H1 (cell line): ENCODE measurements at regions of chr22 and their contacts with region 1.

Region 1: GRCh38 chr22:41946629-41947423 is at the start of gene CENPM:
- DNase-seq: peak; percentile 78 to 97
- H3K4me3 ChIP-seq: peak within 1 kb of the TSS; percentile 67 to 83 (median 75)
- H3K27ac ChIP-seq: peak within 1 kb of the TSS; percentile 78
- H3K4me1 ChIP-seq: peaks cover 7 to 17% (median 10%) of the 10 kb centered on the region in 4 experiments
- H3K27me3 ChIP-seq: no peaks in the 10 kb centered on the region
- CTCF ChIP-seq: no peak
- EP300 ChIP-seq: no peak
- POLR2A ChIP-seq: peak in 1 of 2 experiments; percentile 81; a peak in 2 of 3 replicates
- RAD21 ChIP-seq: no peak
- total RNA-seq, gene CENPM: 30.0 and 32.0 TPM in 2 replicates

Region 2: GRCh38 chr22:41919357-41920224 is 27.2 kb before region 1 on chr22:
- CTCF ChIA-PET with region 1: interaction called, 77 read pairs
- POLR2A ChIA-PET with region 1: interaction called, 10 read pairs
- DNase-seq: peak; percentile 72 to 98
- H3K4me3 ChIP-seq: peak overlapping the region; percentile 33 to 67 (median 34)
- H3K27ac ChIP-seq: no peak overlapping the region
- H3K4me1 ChIP-seq: peaks cover 0 to 18% (median 8%) of the 10 kb centered on the region in 4 experiments; a peak in 5 of 7 replicates
- H3K27me3 ChIP-seq: peaks cover 30 to 82% (median 72%) of the 10 kb centered on the region in 4 experiments
- CTCF ChIP-seq: no peak
- EP300 ChIP-seq: no peak
- POLR2A ChIP-seq: peak in 1 of 2 experiments; percentile 36; a peak in 1 of 3 replicates
- RAD21 ChIP-seq: no peak

Region 3: DNA sequence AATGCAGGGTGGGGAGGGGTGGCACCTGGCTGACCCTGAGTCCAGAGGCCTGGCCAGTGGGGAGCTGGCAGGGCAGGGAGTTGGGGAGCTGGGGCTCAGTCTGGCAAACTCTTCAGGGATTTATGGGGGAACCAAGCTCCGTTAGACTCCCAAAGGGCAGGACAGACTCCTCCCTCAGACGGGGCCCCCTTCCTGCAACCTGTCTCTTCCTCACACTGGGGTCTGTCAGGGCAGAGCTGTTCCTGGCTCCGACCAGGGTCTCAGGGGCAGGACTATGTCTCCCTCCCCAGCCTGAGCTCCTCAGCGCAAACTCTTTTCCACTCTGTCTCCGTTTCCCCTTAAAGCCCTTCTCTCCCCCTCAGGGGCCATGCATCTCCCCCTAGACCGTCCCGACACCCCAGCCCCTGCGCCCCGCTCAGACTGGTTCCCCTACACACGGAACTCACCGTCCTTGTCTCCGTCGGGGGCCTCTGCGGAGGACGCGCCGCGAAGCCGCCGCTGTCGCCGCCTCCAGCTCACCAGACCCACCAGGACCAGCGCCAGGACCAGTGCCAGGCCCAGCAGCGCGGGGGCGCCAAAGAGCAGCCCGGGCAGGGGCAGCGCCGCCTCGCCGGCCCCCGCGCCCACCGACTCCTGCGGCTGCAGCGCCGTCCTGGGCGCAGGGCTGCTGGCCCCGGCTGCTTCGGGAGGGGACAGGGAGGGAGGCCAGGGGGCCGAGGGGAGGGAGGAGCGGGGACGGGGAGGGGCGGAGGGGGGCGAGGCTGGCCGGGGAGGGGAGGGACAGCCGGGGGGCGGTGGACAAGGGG is 21.0 kb before region 1 on chr22:
- CTCF ChIA-PET with region 1: interaction called, 77 read pairs
- POLR2A ChIA-PET with region 1: interaction called, 14 read pairs
- DNase-seq: peak in 1 of 2 experiments; percentile 95
- H3K4me3 ChIP-seq: peak overlapping the region; percentile 23 to 71 (median 31); a peak in 6 of 8 replicates
- H3K27ac ChIP-seq: no peak overlapping the region
- H3K4me1 ChIP-seq: peaks cover 0 to 24% (median 15%) of the 10 kb centered on the region in 4 experiments; a peak in 6 of 7 replicates
- H3K27me3 ChIP-seq: peaks cover 13 to 63% (median 46%) of the 10 kb centered on the region in 4 experiments
- CTCF ChIP-seq: peak; percentile 90 to 93 (median 91)
- EP300 ChIP-seq: no peak
- POLR2A ChIP-seq: 0 out of 3 replicates have a peak, but pooled peaks of 1 of the 2 experiments have one; percentile 22
- RAD21 ChIP-seq: peak; percentile 38 to 64

Region 4: DNA sequence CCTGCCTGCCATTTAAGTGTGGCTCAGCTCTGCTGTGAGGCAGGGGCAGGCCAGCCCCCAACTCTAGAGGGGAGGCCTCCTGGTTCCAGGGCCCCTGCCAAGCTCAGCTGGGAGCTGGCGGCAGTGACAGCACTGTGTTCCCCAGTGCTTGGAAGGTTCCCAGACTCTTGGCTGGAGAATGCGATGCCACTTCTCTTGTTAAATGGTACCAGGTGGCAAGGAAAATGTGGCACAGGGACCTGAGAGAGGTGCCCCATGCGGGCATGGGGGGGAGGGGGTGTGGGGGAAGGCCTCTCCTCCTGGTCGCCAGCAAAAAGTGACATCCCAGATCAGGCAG is 11.8 kb before region 1 on chr22:
- CTCF ChIA-PET with region 1: interaction called, 6 read pairs
- POLR2A ChIA-PET with region 1: interaction called, 13 read pairs
- DNase-seq: no peak
- H3K4me3 ChIP-seq: no peak overlapping the region
- H3K27ac ChIP-seq: no peak overlapping the region
- H3K4me1 ChIP-seq: no peaks in the 10 kb centered on the region; a peak in 1 of 7 replicates
- H3K27me3 ChIP-seq: no peaks in the 10 kb centered on the region; a peak in 2 of 7 replicates
- CTCF ChIP-seq: no peak
- EP300 ChIP-seq: no peak
- POLR2A ChIP-seq: no peak
- RAD21 ChIP-seq: no peak

Region 5: DNA sequence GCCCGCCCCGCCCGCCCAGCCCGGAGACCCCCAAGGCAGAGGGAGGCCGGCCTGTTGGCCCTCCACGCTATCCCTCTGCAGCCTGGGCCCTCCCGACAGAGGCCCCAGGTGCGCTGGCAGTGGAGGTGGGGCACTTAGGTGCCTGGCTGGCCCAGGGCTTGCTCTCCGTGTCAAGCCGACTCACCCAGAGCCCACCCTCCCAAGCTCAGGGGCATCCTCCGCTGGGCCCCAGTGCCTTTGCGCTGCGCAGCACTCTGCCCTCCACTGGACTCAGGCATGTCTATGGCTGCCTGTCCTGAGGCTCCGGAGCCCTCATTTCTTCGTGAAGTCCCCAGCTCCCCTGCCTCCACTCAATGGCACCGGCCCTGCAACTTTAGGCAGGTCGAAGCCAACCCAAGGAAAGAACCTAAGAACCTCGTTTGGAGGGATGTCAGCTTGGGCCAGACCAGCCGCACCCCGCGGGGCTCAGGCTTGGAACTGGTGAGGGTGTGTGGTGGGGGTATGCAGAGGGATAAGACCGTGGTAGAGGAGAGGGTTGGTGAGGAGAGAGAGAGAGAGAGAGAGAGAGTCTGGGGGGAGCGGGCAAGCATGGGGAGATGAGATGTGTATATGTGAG is 11.2 kb after region 1 on chr22:
- CTCF ChIA-PET with region 1: interaction called, 9 read pairs
- POLR2A ChIA-PET with region 1: interaction called, 11 read pairs
- DNase-seq: no peak
- H3K4me3 ChIP-seq: peak overlapping the region; percentile 14 to 49 (median 16); a peak in 7 of 8 replicates
- H3K27ac ChIP-seq: no peak overlapping the region
- H3K4me1 ChIP-seq: peaks cover 0 to 8% (median 6%) of the 10 kb centered on the region in 4 experiments; a peak in 5 of 7 replicates
- H3K27me3 ChIP-seq: peaks cover 0 to 3% (median 1%) of the 10 kb centered on the region in 4 experiments; a peak in 2 of 7 replicates
- CTCF ChIP-seq: no peak
- EP300 ChIP-seq: no peak
- POLR2A ChIP-seq: no peak
- RAD21 ChIP-seq: no peak